Calu3 (cell line): ENCODE measurements at regions of chrX and their contacts with region 1.

Region 1: DNA sequence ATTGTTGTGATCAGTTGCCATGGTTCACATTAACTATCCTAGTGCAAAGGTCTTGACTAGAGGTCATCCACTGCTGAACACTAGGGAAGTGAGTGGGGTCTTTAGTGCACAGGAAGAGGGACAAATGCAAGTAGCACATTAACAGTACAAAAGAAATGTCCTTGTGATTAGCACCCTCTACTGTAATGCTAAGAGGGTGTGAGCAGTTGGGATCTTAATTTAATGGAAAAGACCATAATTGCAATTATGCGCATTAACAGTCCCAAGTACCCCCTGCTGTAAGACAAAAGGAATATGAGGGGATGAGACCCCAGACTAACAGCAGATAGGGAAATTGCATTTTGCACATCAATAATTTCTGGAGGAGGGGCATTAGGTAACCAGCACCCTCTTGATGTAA is 284.9 kb downstream of the CHIC1 start:
- DNase-seq: no peak
- H3K4me3 Mint-ChIP-seq: no peak overlapping the region
- H3K27ac Mint-ChIP-seq: no peak overlapping the region
- H3K4me1 Mint-ChIP-seq: no peaks in the 10 kb centered on the region
- H3K27me3 Mint-ChIP-seq: peaks cover 10% of the 10 kb centered on the region
- CTCF ChIP-seq: no peak

Region 2: GRCh38 chrX:73076838-73077237 is 771.1 kb before region 1 on chrX:
- CTCF ChIA-PET with region 1: no interaction called
- intact Hi-C with region 1: loop called (anchors 10 kb)
- DNase-seq: no peak
- H3K4me3 Mint-ChIP-seq: no peak overlapping the region
- H3K27ac Mint-ChIP-seq: no peak overlapping the region
- H3K4me1 Mint-ChIP-seq: peaks cover 7% of the 10 kb centered on the region
- H3K27me3 Mint-ChIP-seq: no peaks in the 10 kb centered on the region
- CTCF ChIP-seq: no peak

Region 3: GRCh38 chrX:73683236-73683859 is 164.6 kb before region 1 on chrX:
- CTCF ChIA-PET with region 1: no interaction called
- intact Hi-C with region 1: no loop called
- DNase-seq: no peak
- H3K4me3 Mint-ChIP-seq: no peak overlapping the region
- H3K27ac Mint-ChIP-seq: no peak overlapping the region
- H3K4me1 Mint-ChIP-seq: no peaks in the 10 kb centered on the region
- H3K27me3 Mint-ChIP-seq: no peaks in the 10 kb centered on the region
- CTCF ChIP-seq: no peak

Region 4: DNA sequence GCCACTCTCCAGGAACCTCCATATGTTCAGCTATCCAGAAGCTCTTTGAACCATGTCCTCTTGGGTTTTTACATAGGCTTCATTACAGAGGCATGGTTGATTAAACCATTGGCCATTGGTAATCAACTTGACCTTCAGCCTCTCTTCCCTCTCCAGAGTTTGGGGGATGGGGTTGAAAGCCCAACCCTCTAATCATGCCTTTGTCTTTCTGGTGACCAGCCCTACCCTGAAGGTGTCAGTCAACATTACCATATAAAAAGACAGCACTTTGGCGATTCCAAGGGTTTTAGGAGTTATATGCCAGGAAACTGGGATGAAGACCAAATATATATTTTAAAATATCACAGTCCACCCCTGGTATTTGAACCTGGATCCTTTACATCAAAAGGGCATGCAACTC is 62.5 kb before region 1 on chrX:
- CTCF ChIA-PET with region 1: no interaction called
- intact Hi-C with region 1: no loop called
- DNase-seq: no peak
- H3K4me3 Mint-ChIP-seq: no peak overlapping the region
- H3K27ac Mint-ChIP-seq: no peak overlapping the region
- H3K4me1 Mint-ChIP-seq: no peaks in the 10 kb centered on the region
- H3K27me3 Mint-ChIP-seq: no peaks in the 10 kb centered on the region
- CTCF ChIP-seq: no peak

Region 5: DNA sequence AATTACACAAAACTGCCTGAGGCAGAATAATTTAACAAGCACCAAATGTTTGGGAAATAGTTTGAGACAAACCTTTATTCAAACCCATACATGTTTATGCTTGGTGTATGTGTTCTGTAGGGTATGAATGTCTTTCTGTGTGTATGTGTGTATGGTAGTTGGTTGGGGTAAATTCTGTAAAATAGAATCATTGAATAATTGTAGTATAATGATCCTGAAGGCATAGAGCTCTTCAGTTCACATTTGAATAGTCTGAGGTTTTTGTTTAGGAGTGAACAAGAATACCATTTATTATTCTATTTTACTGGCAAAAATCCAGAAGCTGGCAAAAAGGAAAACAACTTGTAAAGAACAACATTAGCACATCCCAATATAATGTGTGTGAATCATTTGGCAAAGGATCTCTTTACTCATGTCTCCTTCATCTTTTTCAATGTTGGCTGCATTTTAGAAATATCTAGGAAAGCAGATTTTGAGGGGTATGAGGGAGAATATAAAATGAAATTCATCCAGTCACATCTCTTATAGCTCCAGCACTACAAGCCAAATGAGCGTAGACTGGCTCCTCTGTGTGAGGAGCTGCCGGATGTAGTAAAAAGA is 75.0 kb after region 1 on chrX:
- CTCF ChIA-PET with region 1: no interaction called
- intact Hi-C with region 1: no loop called
- DNase-seq: no peak
- H3K4me3 Mint-ChIP-seq: no peak overlapping the region
- H3K27ac Mint-ChIP-seq: no peak overlapping the region
- H3K4me1 Mint-ChIP-seq: peaks cover 5% of the 10 kb centered on the region
- H3K27me3 Mint-ChIP-seq: no peaks in the 10 kb centered on the region
- CTCF ChIP-seq: no peak